ENCODE measurements at regions of chr6 and their contacts with region 1.

Region 1: GRCh38 chr6:110389689-110390382 is 25.5 kb downstream of the DDO start:
- DNase-seq: no peak
- ATAC-seq: no peak
- H3K4me3 ChIP-seq: no peak overlapping the region
- H3K27ac ChIP-seq: no peak overlapping the region
- H3K4me1 ChIP-seq: peaks cover 46% of the 10 kb centered on the region
- H3K27me3 ChIP-seq: no peaks in the 10 kb centered on the region
- CTCF ChIP-seq: no peak
- EP300 ChIP-seq: no peak
- POLR2A ChIP-seq: no peak
- RAD21 ChIP-seq: no peak

Region 2: GRCh38 chr6:110053395-110054240 is 336.2 kb before region 1 on chr6:
- CTCF ChIA-PET with region 1: no interaction called
- POLR2A ChIA-PET with region 1: no interaction called
- in situ Hi-C with region 1: loop called (anchors 10 kb)
- intact Hi-C with region 1: loop called (anchors 5 kb)
- DNase-seq: peak; percentile 36
- ATAC-seq: peak; percentile 71
- H3K4me3 ChIP-seq: no peak overlapping the region
- H3K27ac ChIP-seq: no peak overlapping the region
- H3K4me1 ChIP-seq: peaks cover 10% of the 10 kb centered on the region; the same call in 1 of the 2 replicates
- H3K27me3 ChIP-seq: peaks cover 1 to 22% of the 10 kb centered on the region in 2 experiments; a peak in 3 of 5 replicates
- CTCF ChIP-seq: peak; percentile 72
- EP300 ChIP-seq: no peak
- POLR2A ChIP-seq: no peak
- RAD21 ChIP-seq: peak; percentile 37; the same call in 1 of the 2 replicates

Region 3: GRCh38 chr6:110270165-110270564 is 119.7 kb before region 1 on chr6:
- CTCF ChIA-PET with region 1: no interaction called
- POLR2A ChIA-PET with region 1: no interaction called
- in situ Hi-C with region 1: no loop called
- intact Hi-C with region 1: no loop called
- DNase-seq: no peak
- ATAC-seq: no peak
- H3K4me3 ChIP-seq: no peak overlapping the region
- H3K27ac ChIP-seq: no peak overlapping the region
- H3K4me1 ChIP-seq: peaks cover 15% of the 10 kb centered on the region
- H3K27me3 ChIP-seq: no peaks in the 10 kb centered on the region
- CTCF ChIP-seq: no peak
- EP300 ChIP-seq: no peak
- POLR2A ChIP-seq: no peak
- RAD21 ChIP-seq: no peak

Region 4: DNA sequence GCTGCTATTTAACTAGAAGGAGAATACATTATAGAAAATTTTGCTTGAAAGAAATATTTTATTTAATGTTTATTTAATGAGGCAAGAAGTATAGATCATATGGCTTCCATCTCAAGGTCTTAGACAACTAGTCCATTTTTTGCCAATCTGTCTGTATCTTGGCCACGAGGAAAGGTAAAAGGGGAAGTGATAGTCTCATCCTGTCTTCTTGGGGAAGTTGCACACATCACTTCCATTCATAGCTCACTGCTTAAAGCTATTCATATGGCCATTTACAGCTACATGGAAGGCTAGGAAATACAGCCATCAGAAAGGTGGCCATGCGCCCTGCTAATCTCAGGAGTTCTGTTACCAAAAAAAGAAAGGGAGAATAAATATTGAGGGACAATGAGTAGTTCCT is 82.5 kb before region 1 on chr6:
- CTCF ChIA-PET with region 1: interaction called, 6 read pairs
- POLR2A ChIA-PET with region 1: no interaction called
- in situ Hi-C with region 1: no loop called
- intact Hi-C with region 1: loop called (anchors 2 kb)
- DNase-seq: no peak
- ATAC-seq: no peak
- H3K4me3 ChIP-seq: no peak overlapping the region
- H3K27ac ChIP-seq: no peak overlapping the region
- H3K4me1 ChIP-seq: no peaks in the 10 kb centered on the region
- H3K27me3 ChIP-seq: no peaks in the 10 kb centered on the region; a peak in 1 of 5 replicates
- CTCF ChIP-seq: no peak
- EP300 ChIP-seq: no peak
- POLR2A ChIP-seq: no peak
- RAD21 ChIP-seq: no peak